Naive thymus-derived CD4-positive, alpha-beta T cell (primary cell): ENCODE measurements at regions of chr7 and their contacts with region 1.

Region 1: DNA sequence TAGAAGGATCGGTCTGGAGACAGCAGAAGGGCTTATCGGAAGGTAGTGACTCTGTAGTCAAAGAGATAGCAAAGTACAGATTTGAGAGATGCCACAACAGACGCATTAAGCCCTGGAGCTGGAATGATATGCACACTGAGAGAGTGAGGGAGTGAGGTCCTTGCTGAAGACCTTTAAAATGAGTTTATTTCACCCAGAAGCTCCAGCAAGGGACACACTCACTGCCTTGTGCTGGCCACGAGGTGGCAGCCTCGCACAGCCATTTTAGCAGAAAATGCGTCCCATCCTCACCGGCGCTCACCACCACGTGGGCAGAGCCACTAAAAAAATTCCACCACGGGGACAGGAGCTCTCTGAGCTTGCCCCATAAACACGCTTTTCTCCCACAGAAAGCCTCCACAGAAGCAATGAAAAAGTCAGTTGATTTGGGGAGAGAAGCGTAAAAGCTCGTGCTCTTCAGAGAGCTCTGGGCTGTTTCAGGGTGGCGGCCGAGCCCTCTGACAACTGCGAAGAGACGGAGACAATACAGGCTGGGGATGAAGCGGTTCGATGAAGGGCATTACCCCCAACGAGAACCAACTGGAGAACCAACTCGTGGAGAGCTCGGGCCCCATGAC is 163.0 kb upstream of the KLF14 start:
- DNase-seq: peak; percentile 60 to 76 (median 69)
- ATAC-seq: peak; percentile 84
- H3K4me3 ChIP-seq: no peak overlapping the region
- H3K4me3 Mint-ChIP-seq: peak overlapping the region in 7 of 10 donors; percentile 16 to 67 (median 37)
- H3K27ac ChIP-seq: no peak overlapping the region
- H3K27ac Mint-ChIP-seq: peak overlapping the region; percentile 61 to 92 (median 84)
- H3K4me1 ChIP-seq: peaks cover 16 to 35% of the 10 kb centered on the region in 2 donors
- H3K4me1 Mint-ChIP-seq: peaks cover 49 to 86% (median 83%) of the 10 kb centered on the region in 7 donors
- H3K27me3 ChIP-seq: no peaks in the 10 kb centered on the region
- H3K27me3 Mint-ChIP-seq: no peaks in the 10 kb centered on the region

Region 2: GRCh38 chr7:130611218-130611617 is 285.8 kb before region 1 on chr7:
- CTCF ChIA-PET with region 1: no interaction called
- POLR2A ChIA-PET with region 1: no interaction called
- intact Hi-C with region 1: no loop called
- DNase-seq: no peak
- ATAC-seq: no peak
- H3K4me3 ChIP-seq: no peak overlapping the region
- H3K4me3 Mint-ChIP-seq: no peak overlapping the region
- H3K27ac ChIP-seq: no peak overlapping the region
- H3K27ac Mint-ChIP-seq: no peak overlapping the region
- H3K4me1 ChIP-seq: no peaks in the 10 kb centered on the region
- H3K4me1 Mint-ChIP-seq: peaks cover 0 to under 1% (median 0%) of the 10 kb centered on the region in 7 donors
- H3K27me3 ChIP-seq: no peaks in the 10 kb centered on the region
- H3K27me3 Mint-ChIP-seq: no peaks in the 10 kb centered on the region

Region 3: GRCh38 chr7:130941322-130942210 is 44.6 kb after region 1 on chr7:
- CTCF ChIA-PET with region 1: interaction called, 11 read pairs
- POLR2A ChIA-PET with region 1: no interaction called
- intact Hi-C with region 1: loop called in 1 of 2 experiments (anchors 2 kb)
- DNase-seq: peak in 1 of 9 donors; percentile 37
- ATAC-seq: peak; percentile 42
- H3K4me3 ChIP-seq: peak overlapping the region; percentile 41
- H3K4me3 Mint-ChIP-seq: peak overlapping the region; percentile 72 to 90 (median 84)
- H3K27ac ChIP-seq: peak overlapping the region; percentile 78
- H3K27ac Mint-ChIP-seq: peak overlapping the region in 8 of 9 donors; percentile 88 to 96 (median 94)
- H3K4me1 ChIP-seq: peaks cover 56 to 69% of the 10 kb centered on the region in 2 donors
- H3K4me1 Mint-ChIP-seq: peaks cover 68 to 97% (median 92%) of the 10 kb centered on the region in 7 donors
- H3K27me3 ChIP-seq: no peaks in the 10 kb centered on the region
- H3K27me3 Mint-ChIP-seq: no peaks in the 10 kb centered on the region

Region 4: DNA sequence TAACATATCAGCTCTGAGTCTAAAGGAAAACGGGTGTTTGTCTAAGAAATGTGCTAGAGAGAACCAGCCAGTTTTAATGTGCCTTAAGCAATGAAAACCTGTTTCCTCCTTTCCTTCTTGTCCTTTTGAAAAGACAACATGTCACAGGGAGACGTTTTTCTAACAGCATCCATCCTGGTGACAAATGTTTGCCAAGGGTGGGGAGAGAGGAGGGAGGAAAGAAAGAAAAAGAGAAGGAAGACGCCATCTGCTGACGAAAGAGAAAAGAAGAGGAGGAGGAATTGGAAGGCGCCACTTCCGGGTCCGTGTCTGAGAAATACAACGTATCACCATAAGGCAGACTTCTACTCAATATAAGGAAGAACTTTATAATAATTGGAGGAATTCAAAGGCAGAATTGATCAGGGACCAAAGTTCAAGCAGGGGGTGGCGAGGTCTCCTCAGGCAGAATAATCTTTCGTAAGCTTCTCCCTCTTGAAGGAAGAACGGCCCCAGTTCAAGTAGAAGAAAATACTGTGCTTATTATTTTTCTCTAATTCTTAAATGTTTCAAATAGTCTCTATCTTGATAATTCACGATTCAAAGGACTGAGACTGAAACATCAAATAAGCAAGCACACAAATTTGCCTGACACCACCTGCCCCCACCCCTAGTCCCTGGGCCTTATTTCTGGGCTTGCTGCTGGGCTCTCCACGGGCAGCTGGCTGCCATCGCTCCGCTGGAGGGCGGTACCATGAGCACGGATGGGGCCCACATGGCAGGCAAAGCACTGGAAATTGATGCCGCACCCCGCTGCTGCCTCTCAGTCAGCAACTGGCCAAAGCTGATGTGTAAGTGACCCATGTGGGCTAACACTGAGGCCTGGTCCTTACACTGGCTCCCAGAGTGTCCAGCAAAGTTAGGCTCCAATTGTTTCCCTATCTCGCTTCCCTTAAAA is 110.7 kb after region 1 on chr7:
- CTCF ChIA-PET with region 1: interaction called, 21 read pairs
- POLR2A ChIA-PET with region 1: no interaction called
- intact Hi-C with region 1: loop called (anchors 1 kb)
- DNase-seq: peak in 7 of 9 donors; percentile 51 to 69 (median 63)
- ATAC-seq: peak; percentile 72
- H3K4me3 ChIP-seq: no peak overlapping the region
- H3K4me3 Mint-ChIP-seq: peak overlapping the region in 9 of 10 donors; percentile 52 to 87 (median 69)
- H3K27ac ChIP-seq: peak overlapping the region; percentile 67
- H3K27ac Mint-ChIP-seq: peak overlapping the region; percentile 83 to 97 (median 88)
- H3K4me1 ChIP-seq: peaks cover 60 to 64% of the 10 kb centered on the region in 2 donors
- H3K4me1 Mint-ChIP-seq: peaks cover 68 to 94% (median 87%) of the 10 kb centered on the region in 7 donors
- H3K27me3 ChIP-seq: no peaks in the 10 kb centered on the region
- H3K27me3 Mint-ChIP-seq: no peaks in the 10 kb centered on the region

Region 5: GRCh38 chr7:131040467-131040932 is 143.5 kb after region 1 on chr7:
- CTCF ChIA-PET with region 1: interaction called, 25 read pairs
- POLR2A ChIA-PET with region 1: no interaction called
- intact Hi-C with region 1: loop called (anchors 1 kb)
- DNase-seq: peak in 7 of 9 donors; percentile 31 to 63 (median 56)
- ATAC-seq: peak; percentile 71
- H3K4me3 ChIP-seq: no peak overlapping the region
- H3K4me3 Mint-ChIP-seq: peak overlapping the region; percentile 16 to 84 (median 60)
- H3K27ac ChIP-seq: no peak overlapping the region
- H3K27ac Mint-ChIP-seq: peak overlapping the region; percentile 29 to 82 (median 54)
- H3K4me1 ChIP-seq: peaks cover 14 to 27% of the 10 kb centered on the region in 2 donors
- H3K4me1 Mint-ChIP-seq: peaks cover 44 to 78% (median 68%) of the 10 kb centered on the region in 7 donors
- H3K27me3 ChIP-seq: no peaks in the 10 kb centered on the region
- H3K27me3 Mint-ChIP-seq: no peaks in the 10 kb centered on the region

Region 6: GRCh38 chr7:131302876-131303707 is 406.1 kb after region 1 on chr7:
- CTCF ChIA-PET with region 1: interaction called, 5 read pairs
- POLR2A ChIA-PET with region 1: no interaction called
- intact Hi-C with region 1: loop called in 1 of 2 experiments (anchors 1 kb)
- DNase-seq: peak in 6 of 9 donors; percentile 16 to 34 (median 24)
- ATAC-seq: peak; percentile 45
- H3K4me3 ChIP-seq: no peak overlapping the region
- H3K4me3 Mint-ChIP-seq: no peak overlapping the region
- H3K27ac ChIP-seq: no peak overlapping the region
- H3K27ac Mint-ChIP-seq: peak overlapping the region in 1 of 9 donors; percentile 68
- H3K4me1 ChIP-seq: no peaks in the 10 kb centered on the region
- H3K4me1 Mint-ChIP-seq: no peaks in the 10 kb centered on the region
- H3K27me3 ChIP-seq: no peaks in the 10 kb centered on the region
- H3K27me3 Mint-ChIP-seq: peaks cover 0 to 4% (median 0%) of the 10 kb centered on the region in 5 donors

Region 7: DNA sequence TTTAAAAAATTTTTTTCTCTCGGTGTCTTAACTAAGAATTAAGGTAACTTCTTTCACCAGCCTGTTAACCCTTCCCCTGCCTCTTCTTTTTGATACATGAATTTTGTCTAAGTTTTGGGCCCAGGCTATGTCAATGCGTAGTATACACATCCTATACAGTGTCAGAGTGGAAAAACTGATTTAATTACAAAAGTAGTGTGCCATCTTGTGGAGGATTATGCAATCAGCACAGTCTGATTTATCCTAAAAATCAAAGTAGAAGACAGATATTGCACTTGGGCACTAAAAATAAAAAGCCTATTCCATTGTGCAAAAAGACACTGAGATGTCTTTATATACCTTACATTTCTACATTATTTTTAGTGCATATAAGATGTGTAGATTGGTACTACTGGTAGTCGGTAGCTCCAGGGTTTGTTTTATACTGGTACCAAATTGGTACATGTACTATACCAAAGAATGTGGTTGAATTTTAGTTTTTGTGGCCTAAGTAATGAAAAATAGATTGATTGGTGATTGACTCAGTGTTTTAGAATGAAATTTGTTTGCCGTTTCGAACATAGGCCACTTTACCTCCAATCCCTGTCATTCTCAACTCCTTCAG is 527.3 kb after region 1 on chr7:
- CTCF ChIA-PET with region 1: interaction called, 3 read pairs
- POLR2A ChIA-PET with region 1: no interaction called
- intact Hi-C with region 1: loop called (anchors 1 to 10 kb)
- DNase-seq: peak in 7 of 9 donors; percentile 18 to 50 (median 44)
- ATAC-seq: peak; percentile 90
- H3K4me3 ChIP-seq: no peak overlapping the region
- H3K4me3 Mint-ChIP-seq: no peak overlapping the region
- H3K27ac ChIP-seq: no peak overlapping the region
- H3K27ac Mint-ChIP-seq: peak overlapping the region in 2 of 9 donors; percentile 11
- H3K4me1 ChIP-seq: no peaks in the 10 kb centered on the region
- H3K4me1 Mint-ChIP-seq: peaks cover 0 to 20% (median 13%) of the 10 kb centered on the region in 7 donors
- H3K27me3 ChIP-seq: no peaks in the 10 kb centered on the region
- H3K27me3 Mint-ChIP-seq: no peaks in the 10 kb centered on the region

Region 8: GRCh38 chr7:131513245-131514061 is 616.4 kb after region 1 on chr7:
- CTCF ChIA-PET with region 1: no interaction called
- POLR2A ChIA-PET with region 1: no interaction called
- intact Hi-C with region 1: loop called in 1 of 2 experiments (anchors 10 kb)
- DNase-seq: peak; percentile 39 to 80 (median 65)
- ATAC-seq: peak; percentile 98
- H3K4me3 ChIP-seq: no peak overlapping the region
- H3K4me3 Mint-ChIP-seq: peak overlapping the region in 5 of 10 donors; percentile 33 to 65 (median 47)
- H3K27ac ChIP-seq: no peak overlapping the region
- H3K27ac Mint-ChIP-seq: peak overlapping the region in 3 of 9 donors; percentile 1 to 27 (median 21)
- H3K4me1 ChIP-seq: peaks cover 0 to 4% of the 10 kb centered on the region in 2 donors
- H3K4me1 Mint-ChIP-seq: peaks cover 11 to 22% (median 19%) of the 10 kb centered on the region in 7 donors
- H3K27me3 ChIP-seq: no peaks in the 10 kb centered on the region
- H3K27me3 Mint-ChIP-seq: peaks cover 0 to 13% (median 3%) of the 10 kb centered on the region in 5 donors